Right ventricle myocardium inferior (tissue), 1 donor: ENCODE measurements at regions of chr2 and their contacts with region 1.

Region 1: DNA sequence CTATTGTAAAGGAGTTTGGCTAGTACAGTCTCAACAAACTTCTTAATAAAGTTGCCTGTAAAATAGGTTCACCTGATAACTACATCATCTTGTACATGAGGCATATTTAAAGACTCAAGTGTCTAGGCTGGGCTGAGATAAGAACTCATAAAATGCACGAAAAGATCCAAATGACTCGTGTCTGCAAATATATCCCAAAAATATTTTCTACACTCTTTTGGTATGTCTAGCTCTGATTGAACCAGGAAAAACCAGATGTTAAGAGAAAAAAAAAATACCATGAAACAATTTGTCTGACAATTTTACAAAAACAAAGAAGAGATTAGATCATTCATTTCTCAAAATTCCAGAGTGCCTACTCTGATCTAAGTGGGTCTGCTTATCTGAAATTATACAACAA is 166.9 kb upstream of the OSR1 start:
- DNase-seq: no peak
- ATAC-seq: no peak

Region 2: GRCh38 chr2:19329445-19329844 is 195.9 kb before region 1 on chr2:
- intact Hi-C with region 1: loop called (anchors 5 kb)
- DNase-seq: no peak
- ATAC-seq: no peak

Region 3: DNA sequence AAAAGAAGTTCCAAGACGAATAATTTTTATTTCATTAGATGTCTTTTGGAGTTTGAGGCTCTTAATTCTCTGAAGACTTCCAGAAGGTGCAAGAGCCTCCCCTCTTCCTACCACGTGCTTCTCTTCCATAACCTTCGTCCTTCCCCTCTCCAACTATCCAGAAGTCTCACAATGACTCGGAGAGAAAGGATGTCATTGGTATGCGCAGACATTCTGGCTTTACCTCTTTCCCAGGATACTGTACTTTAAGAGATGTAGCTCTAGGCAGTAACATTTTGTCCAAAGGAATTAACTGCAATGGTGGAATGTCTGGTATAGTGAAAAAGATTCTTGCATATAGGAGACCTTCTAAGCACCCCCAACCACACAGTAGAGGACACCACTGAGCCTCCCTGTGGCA is 82.1 kb after region 1 on chr2:
- intact Hi-C with region 1: no loop called
- DNase-seq: no peak
- ATAC-seq: no peak

Region 4: GRCh38 chr2:19933351-19933981 is 408.2 kb after region 1 on chr2:
- intact Hi-C with region 1: no loop called
- DNase-seq: no peak
- ATAC-seq: no peak